Caco-2 (cell line): ENCODE measurements at regions of chr12 and their contacts with region 1.

Region 1: DNA sequence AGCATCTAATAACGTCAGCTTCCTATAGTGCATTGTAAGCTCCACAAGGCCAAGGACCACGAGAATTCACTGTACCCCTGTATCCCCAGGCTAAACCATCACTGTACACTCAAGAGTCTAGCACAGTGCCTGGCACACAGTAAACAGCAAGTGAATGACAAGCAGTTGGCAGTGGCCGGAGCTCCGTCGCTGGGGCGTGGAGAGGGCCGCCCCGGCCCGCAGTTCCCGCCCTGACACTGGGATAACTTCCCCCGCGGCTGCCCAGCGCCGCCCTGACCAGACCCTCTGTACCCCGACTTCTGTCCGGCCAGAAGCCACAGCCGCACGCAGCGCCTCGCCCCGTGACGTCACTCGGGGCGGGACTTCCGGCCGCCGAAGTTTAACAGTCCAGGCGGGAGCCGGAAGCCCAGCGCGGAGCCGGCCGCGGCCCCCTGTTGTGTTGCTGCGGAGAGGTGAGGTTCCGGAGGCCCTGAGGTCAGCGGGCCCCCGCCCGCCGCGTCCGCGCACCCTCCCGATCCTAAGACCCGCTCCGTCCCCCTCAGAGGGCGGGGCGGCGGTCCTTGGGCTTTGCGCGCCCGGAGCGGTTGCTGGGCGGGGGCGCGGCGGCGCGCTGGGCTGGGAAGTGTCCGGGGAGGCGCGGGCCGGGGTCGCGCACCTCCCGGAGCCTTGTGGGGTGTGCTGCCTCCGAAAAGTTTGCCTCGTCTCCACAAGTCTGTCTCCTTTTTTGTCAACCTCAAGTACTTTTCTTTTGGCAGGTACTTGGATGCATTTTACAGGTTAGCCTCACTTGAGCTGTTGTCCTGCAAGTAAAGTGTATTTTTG is at the start of gene NEDD1:
- DNase-seq: peak; percentile 88 to 90
- H3K4me3 ChIP-seq: peak within 1 kb of the TSS; percentile 71
- H3K4me3 Mint-ChIP-seq: peak within 1 kb of the TSS; percentile 91
- H3K27ac Mint-ChIP-seq: peak within 1 kb of the TSS; percentile 81
- H3K4me1 ChIP-seq: 0 out of 2 replicates have a peak, but pooled peaks cover 4% of the 10 kb centered on the region
- H3K4me1 Mint-ChIP-seq: peaks cover 21% of the 10 kb centered on the region
- H3K27me3 ChIP-seq: no peaks in the 10 kb centered on the region
- H3K27me3 Mint-ChIP-seq: no peaks in the 10 kb centered on the region
- CTCF ChIP-seq: no peak
- total RNA-seq, gene NEDD1: 21.9 and 23.1 TPM in 2 replicates

Region 2: GRCh38 chr12:96710127-96710745 is 196.8 kb before region 1 on chr12:
- CTCF ChIA-PET with region 1: no interaction called
- POLR2A ChIA-PET with region 1: no interaction called
- intact Hi-C with region 1: loop called (anchors 5 kb)
- DNase-seq: peak; percentile 36 to 46
- H3K4me3 ChIP-seq: no peak overlapping the region
- H3K4me3 Mint-ChIP-seq: no peak overlapping the region
- H3K27ac Mint-ChIP-seq: no peak overlapping the region
- H3K4me1 ChIP-seq: no peaks in the 10 kb centered on the region
- H3K4me1 Mint-ChIP-seq: no peaks in the 10 kb centered on the region
- H3K27me3 ChIP-seq: no peaks in the 10 kb centered on the region
- H3K27me3 Mint-ChIP-seq: peaks cover 2% of the 10 kb centered on the region
- CTCF ChIP-seq: peak in 1 of 2 experiments; percentile 46

Region 3: DNA sequence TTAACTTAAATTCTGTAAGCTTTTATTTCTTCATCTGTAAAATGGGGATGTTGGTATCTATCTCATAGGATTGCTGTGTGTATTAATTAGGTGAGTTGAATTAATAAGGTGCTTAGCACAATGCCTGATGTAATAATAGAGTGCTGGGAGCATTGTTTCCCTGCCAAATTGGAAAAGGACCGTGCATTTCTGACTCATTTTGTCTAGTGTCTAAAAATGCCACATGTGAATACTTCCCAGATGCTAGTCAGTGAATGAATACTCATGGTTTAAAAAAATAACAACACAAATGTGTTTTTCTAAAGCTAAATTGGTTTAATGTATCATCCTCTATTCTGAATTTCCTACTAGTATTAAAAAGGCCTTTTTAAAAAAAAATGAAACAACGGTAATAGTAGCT is 45.4 kb before region 1 on chr12:
- CTCF ChIA-PET with region 1: no interaction called
- POLR2A ChIA-PET with region 1: no interaction called
- intact Hi-C with region 1: loop called (anchors 1 kb)
- DNase-seq: no peak
- H3K4me3 ChIP-seq: no peak overlapping the region
- H3K4me3 Mint-ChIP-seq: no peak overlapping the region
- H3K27ac Mint-ChIP-seq: peak overlapping the region; percentile 55
- H3K4me1 ChIP-seq: peaks cover 24% of the 10 kb centered on the region
- H3K4me1 Mint-ChIP-seq: peaks cover 24% of the 10 kb centered on the region
- H3K27me3 ChIP-seq: no peaks in the 10 kb centered on the region
- H3K27me3 Mint-ChIP-seq: no peaks in the 10 kb centered on the region
- CTCF ChIP-seq: no peak

Region 4: GRCh38 chr12:96886998-96887677 is 19.9 kb before region 1 on chr12:
- CTCF ChIA-PET with region 1: no interaction called
- POLR2A ChIA-PET with region 1: no interaction called
- intact Hi-C with region 1: no loop called
- DNase-seq: no peak
- H3K4me3 ChIP-seq: no peak overlapping the region
- H3K4me3 Mint-ChIP-seq: no peak overlapping the region
- H3K27ac Mint-ChIP-seq: peak overlapping the region; percentile 26
- H3K4me1 ChIP-seq: peaks cover 17% of the 10 kb centered on the region; the same call in 1 of the 2 replicates
- H3K4me1 Mint-ChIP-seq: no peaks in the 10 kb centered on the region
- H3K27me3 ChIP-seq: no peaks in the 10 kb centered on the region
- H3K27me3 Mint-ChIP-seq: no peaks in the 10 kb centered on the region
- CTCF ChIP-seq: no peak

Region 5: DNA sequence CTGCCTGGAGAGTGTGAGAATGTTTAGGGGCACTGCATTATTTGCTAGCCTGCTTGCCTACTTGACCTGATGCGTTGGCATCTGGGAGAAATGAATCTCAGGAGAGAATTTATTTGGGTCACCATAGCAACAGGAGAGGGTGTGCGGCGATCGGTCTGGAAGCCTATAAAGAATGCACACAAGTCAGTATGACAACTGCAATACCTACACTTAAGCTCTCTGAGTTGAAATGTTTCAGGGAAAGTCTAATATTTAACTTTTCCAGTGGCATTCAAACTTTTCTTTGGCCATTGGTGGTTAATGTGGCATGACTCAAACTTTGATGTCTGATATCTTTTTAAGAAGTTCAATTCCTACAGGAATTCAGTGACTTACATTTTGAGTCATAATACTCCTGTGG is 205.1 kb after region 1 on chr12:
- CTCF ChIA-PET with region 1: no interaction called
- POLR2A ChIA-PET with region 1: no interaction called
- intact Hi-C with region 1: no loop called
- DNase-seq: no peak
- H3K4me3 ChIP-seq: no peak overlapping the region
- H3K4me3 Mint-ChIP-seq: no peak overlapping the region
- H3K27ac Mint-ChIP-seq: no peak overlapping the region
- H3K4me1 ChIP-seq: no peaks in the 10 kb centered on the region
- H3K4me1 Mint-ChIP-seq: no peaks in the 10 kb centered on the region
- H3K27me3 ChIP-seq: no peaks in the 10 kb centered on the region
- H3K27me3 Mint-ChIP-seq: peaks cover 7% of the 10 kb centered on the region
- CTCF ChIP-seq: no peak